ENCODE measurements at regions of chr10 and their contacts with region 1.

Region 1: GRCh38 chr10:124732931-124733570 is 11.1 kb downstream of the FAM53B start:
- DNase-seq: no peak

Region 2: DNA sequence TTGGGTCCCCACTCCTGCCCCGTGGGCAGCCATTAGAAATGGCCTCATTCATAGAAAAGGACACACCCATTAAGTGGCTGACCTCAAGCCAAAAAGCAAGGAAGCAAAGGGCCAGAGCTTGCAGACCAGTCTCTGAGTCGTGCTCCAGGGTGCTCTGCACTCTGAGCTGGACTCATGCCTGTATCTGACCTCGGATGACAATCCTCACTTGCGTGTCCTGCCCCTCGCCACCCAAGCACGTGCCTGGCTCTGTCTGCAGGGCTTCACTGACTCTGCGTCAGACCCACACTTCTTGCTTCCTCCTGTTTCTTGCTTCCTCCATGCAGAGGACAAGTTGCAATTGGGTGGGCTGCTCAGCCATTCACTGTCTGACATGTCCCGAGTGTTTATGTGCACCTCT is 453.2 kb before region 1 on chr10:
- intact Hi-C with region 1: no loop called
- DNase-seq: no peak

Region 3: DNA sequence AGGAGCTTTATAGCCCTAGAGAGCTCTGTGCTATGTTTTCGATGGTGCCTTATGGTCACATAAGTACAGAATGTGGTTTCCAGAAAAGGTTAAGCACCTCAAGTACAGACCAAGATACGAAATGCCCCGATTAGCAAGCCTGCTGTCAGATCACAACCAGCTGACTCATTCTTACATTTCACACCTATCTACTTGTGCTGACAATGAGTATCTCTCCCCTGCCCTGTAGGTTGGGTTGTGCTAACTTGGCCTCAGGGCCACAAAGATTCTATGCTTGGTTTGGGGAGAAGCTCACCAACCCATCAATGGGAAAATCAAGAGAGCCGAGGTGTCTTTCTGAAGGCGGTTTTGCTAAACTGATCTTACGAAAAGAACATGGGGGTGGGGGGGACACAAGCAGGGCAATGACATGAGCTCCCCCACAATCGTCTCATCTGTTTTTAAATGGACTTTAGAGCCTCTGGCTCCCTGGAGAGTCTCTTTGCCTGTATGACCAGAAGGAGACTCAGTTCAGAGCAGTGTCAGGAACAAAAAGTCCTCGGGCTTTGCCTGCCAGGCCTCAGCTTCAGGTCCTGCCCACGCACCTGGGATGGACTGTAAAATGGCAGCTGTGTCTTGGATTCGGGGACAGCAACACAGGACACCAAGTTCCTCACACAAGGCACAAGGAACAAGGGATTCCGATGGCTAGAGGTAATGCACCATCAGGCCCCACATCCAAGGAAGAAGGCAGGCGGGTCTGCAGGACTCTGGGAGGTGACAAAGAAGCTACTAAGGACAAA is 44.0 kb before region 1 on chr10:
- intact Hi-C with region 1: loop called (anchors 10 kb)
- DNase-seq: no peak

Measured in cardiac septum (tissue), 1 donor.